ENCODE measurements at regions of chr11 and their contacts with region 1.

Region 1: DNA sequence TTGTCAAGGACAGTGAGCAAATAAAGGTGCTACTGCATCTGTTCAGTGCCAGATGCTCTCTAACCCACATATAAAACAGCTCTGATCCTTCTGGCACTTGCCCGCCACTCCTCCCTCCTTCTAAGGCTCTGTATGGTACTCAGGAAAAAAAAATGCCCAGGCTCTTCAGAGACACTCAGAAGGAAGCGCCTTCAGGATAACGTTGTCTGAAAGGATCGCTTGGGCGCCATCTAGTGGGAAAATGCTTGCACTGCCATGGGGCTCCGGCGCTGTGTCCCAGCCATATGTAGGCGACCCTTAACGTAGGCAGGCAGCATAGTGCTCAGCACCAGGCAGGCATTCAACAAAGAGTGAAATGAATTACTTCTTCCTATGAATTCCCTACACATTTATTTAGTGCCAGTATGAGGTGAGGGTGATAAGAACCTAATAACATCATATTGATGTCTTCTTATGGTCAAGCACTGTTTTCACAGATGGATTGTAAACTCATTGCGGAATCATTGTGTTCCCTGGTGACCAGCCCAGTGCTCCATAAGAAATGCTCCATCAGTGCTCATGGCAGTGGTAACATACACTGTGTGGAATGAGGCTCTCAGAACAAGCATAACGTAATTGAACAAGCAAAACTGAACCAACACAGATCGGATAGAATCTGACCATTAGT is 39.6 kb downstream of the PAMR1 start:
- DNase-seq: no peak
- H3K4me3 ChIP-seq: no peak overlapping the region
- CTCF ChIP-seq: peak; percentile 90

Region 2: DNA sequence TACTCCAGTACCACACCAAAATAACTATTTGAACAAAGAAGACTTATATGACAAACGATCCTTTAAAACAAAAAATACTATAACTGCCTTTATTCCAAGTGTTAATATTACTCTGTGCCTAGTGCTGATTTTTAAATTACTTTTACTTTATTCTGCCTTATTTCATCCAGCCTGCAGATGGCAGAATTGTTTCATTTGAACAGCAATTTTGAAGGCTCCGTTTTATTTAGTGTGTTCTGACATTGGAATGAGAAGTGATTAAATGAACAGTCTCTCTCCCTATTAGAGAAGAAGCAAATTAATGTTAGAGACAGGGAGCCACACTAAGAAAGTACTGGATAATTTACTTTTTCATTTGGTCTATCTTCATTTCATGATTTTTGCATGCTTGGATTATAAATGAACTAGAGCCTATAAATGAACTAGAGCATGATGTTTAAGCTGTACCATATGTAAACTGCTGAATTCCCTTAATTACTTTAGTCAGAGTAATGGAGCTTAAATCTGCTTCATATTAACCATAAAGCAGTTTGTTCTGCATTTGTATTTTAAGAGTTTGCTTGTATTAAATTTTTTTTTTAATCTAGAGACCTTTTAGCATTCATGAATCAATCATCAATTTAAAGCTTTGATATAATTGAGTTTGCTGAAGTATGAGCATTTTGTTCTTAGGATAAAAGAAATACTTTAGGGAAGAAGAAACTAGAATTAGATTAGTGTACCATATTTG is 559.5 kb before region 1 on chr11:
- CTCF ChIA-PET with region 1: interaction called, 16 read pairs
- POLR2A ChIA-PET with region 1: no interaction called
- DNase-seq: no peak
- H3K4me3 ChIP-seq: no peak overlapping the region
- CTCF ChIP-seq: peak; percentile 25

Region 3: DNA sequence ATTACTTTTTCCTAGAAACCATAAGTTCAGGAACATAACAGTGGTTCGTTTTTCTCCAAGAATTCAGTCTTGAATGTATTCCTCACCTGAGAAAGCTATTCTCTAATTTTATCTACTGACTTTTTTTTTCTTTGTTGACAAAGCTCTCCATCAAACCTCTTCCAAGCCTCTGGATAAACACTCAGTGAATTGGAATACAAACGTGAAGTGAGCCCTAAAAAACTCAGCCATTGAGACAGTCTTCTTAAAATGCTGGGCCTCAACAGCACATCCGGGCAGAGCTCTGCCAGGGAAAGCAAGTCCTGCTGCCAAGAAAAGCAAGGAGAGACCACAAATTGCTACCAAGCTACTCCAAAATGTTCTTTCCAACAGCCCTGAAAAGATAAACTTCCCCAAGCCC is 58.7 kb before region 1 on chr11:
- CTCF ChIA-PET with region 1: interaction called, 15 read pairs
- POLR2A ChIA-PET with region 1: no interaction called
- DNase-seq: peak; percentile 79
- H3K4me3 ChIP-seq: no peak overlapping the region
- CTCF ChIP-seq: no peak

Region 4: GRCh38 chr11:35511666-35512065 is 25.9 kb after region 1 on chr11:
- CTCF ChIA-PET with region 1: interaction called, 41 read pairs
- POLR2A ChIA-PET with region 1: interaction called, 3 read pairs
- DNase-seq: no peak
- H3K4me3 ChIP-seq: no peak overlapping the region
- CTCF ChIP-seq: no peak

Region 5: GRCh38 chr11:35563484-35564244 is 77.9 kb after region 1 on chr11:
- CTCF ChIA-PET with region 1: interaction called, 10 read pairs
- POLR2A ChIA-PET with region 1: no interaction called
- DNase-seq: no peak
- H3K4me3 ChIP-seq: no peak overlapping the region
- CTCF ChIP-seq: no peak

Region 6: GRCh38 chr11:35617687-35618496 is 132.1 kb after region 1 on chr11 and contains the start of gene FJX1:
- CTCF ChIA-PET with region 1: interaction called, 43 read pairs
- POLR2A ChIA-PET with region 1: interaction called, 3 read pairs
- DNase-seq: no peak
- H3K4me3 ChIP-seq: peak within 1 kb of the TSS; percentile 69
- CTCF ChIP-seq: no peak

Region 7: GRCh38 chr11:35780951-35781860 is 295.4 kb after region 1 on chr11:
- CTCF ChIA-PET with region 1: no interaction called
- POLR2A ChIA-PET with region 1: no interaction called
- DNase-seq: peak; percentile 53
- H3K4me3 ChIP-seq: no peak overlapping the region
- CTCF ChIP-seq: no peak

Region 8: DNA sequence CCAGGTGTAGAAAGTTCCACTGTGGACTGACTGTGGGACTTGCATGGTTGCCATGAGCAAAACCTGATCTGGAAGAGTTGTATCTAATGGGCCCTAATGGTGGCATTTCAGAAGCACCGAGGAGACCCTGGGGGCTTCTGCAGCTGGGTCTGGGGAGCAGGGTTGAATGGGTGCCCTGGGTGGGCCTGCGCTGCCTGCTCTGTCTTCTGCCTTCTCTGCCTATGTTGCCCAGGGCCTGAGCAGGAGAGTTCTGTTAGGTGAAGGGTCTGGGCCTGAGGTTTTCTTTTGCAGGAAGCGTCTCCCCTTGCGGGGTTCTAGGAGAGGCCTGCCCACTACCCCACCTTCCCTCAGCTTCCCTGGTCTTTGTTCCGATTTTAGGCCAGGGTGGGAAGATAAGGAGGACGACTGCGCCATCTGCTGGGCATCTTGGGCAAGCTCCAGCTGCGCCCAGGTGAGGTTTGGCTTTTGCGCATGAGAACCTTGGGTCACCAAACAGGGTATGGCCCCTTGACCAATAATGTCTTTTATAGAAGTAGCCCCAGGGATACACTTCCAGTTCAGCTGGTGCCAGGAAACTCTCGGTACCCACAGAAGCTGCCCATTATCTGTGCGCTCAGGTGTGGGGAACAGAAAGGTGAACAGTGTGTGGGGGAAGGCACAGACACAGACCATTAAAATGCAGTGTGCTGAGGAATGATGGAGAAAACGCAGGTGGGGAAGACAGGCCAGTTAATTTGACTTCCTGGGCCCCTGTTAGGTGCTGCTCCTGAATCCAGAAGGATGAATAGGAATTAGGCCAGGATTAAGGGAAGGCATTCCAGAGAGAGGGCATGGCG is 780.2 kb after region 1 on chr11:
- CTCF ChIA-PET with region 1: interaction called, 40 read pairs
- POLR2A ChIA-PET with region 1: no interaction called
- DNase-seq: no peak
- H3K4me3 ChIP-seq: no peak overlapping the region
- CTCF ChIP-seq: peak; percentile 87

Measured in AG04449 (cell line).